CD14-positive monocyte (primary cell): ENCODE measurements at regions of chrX and their contacts with region 1.

Region 1: GRCh38 chrX:153470435-153471363 is at the start of gene HAUS7:
- DNase-seq: peak; percentile 78 to 92 (median 91)
- H3K4me3 ChIP-seq: peak within 1 kb of the TSS; percentile 52 to 83 (median 71)
- H3K4me3 Mint-ChIP-seq: peak within 1 kb of the TSS; percentile 82 to 86
- H3K27ac ChIP-seq: peak within 1 kb of the TSS in 1 of 2 donors; percentile 78
- H3K27ac Mint-ChIP-seq: peak within 1 kb of the TSS in 6 of 7 donors; percentile 25 to 84 (median 76)
- H3K4me1 ChIP-seq: peaks cover 20 to 21% of the 10 kb centered on the region in 2 donors
- H3K4me1 Mint-ChIP-seq: peaks cover 15% of the 10 kb centered on the region
- H3K27me3 ChIP-seq: peaks cover 0 to 8% of the 10 kb centered on the region in 2 donors
- H3K27me3 Mint-ChIP-seq: peaks cover 7 to 16% (median 14%) of the 10 kb centered on the region in 3 donors
- CTCF ChIP-seq: peak; percentile 49
- polyA plus RNA-seq, gene HAUS7: 23.8 to 37.5 (median 26.7) TPM

Region 2: DNA sequence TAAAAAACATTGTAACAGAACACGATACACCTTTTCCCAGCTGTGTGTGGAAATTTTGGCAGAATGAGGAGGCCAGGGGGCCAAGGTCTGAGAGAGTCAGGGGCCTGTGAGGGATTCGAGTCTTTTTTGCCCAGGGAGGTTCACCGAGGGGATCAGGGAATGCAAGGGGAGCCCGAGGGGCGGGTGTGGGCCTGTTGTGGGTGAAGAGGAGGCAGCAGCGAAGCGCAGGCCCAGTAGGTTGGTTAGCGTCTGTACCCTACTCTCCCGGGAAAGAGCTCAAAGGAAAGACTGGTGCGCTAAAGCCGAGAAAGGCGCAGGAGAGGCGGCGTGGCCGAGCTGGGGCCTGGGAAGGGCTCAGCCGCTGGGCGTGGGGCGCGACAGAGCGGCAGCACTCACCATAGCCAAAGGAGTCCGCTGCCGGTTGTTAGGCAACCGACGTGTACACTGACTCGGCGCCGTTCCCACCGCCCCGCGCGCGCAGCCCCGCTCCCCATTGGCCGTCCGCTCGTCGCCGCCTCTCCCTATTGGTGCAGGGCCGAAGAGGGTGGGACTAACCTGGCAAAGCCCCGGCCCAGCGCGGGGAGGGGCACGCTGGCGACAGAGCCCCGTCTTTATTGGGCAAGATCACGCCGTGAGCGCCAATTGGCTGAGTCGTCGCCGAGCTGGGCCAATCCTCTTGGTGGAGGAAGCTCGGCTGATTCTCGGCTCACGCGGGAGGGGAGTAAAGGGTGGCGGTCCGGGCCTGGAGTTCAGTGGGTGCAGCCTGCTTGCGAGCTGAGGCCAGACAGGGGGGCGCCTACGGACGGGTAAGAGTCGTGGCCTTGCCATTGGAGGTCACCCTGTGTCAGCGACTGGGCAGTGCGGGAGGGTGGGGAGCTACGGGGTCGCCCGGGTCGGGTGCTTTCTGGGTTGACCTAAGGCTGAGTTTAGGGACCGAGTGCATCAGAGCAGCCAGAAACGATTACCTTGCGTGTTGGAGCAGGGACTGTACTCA is 640.1 kb before region 1 on chrX and contains the starts of genes CETN2 and NSDHL:
- intact Hi-C with region 1: loop called in 1 of 2 experiments (anchors 2 kb)
- DNase-seq: peak; percentile 89 to 94 (median 93)
- H3K4me3 ChIP-seq: peak within 1 kb of the TSS; percentile 44 to 78 (median 66)
- H3K4me3 Mint-ChIP-seq: peak within 1 kb of the TSS; percentile 85 to 92
- H3K27ac ChIP-seq: peak within 1 kb of the TSS; percentile 40 to 83
- H3K27ac Mint-ChIP-seq: peak within 1 kb of the TSS; percentile 85 to 96 (median 89)
- H3K4me1 ChIP-seq: peaks cover 12 to 17% of the 10 kb centered on the region in 2 donors
- H3K4me1 Mint-ChIP-seq: peaks cover 20% of the 10 kb centered on the region
- H3K27me3 ChIP-seq: no peaks in the 10 kb centered on the region
- H3K27me3 Mint-ChIP-seq: peaks cover 0 to 13% (median 2%) of the 10 kb centered on the region in 3 donors
- CTCF ChIP-seq: no peak
- polyA plus RNA-seq, gene CETN2: 5.4 to 26.7 (median 19.9) TPM
- polyA plus RNA-seq, gene NSDHL: 8.2 to 21.3 (median 19.9) TPM

Region 3: GRCh38 chrX:153507484-153508178 is 36.9 kb after region 1 on chrX:
- intact Hi-C with region 1: loop called in 1 of 2 experiments (anchors 5 kb)
- DNase-seq: peak; percentile 60 to 69 (median 63)
- H3K4me3 ChIP-seq: no peak overlapping the region
- H3K4me3 Mint-ChIP-seq: no peak overlapping the region
- H3K27ac ChIP-seq: no peak overlapping the region
- H3K27ac Mint-ChIP-seq: no peak overlapping the region
- H3K4me1 ChIP-seq: no peaks in the 10 kb centered on the region
- H3K4me1 Mint-ChIP-seq: peaks cover 3% of the 10 kb centered on the region
- H3K27me3 ChIP-seq: no peaks in the 10 kb centered on the region
- H3K27me3 Mint-ChIP-seq: peaks cover 4 to 10% (median 4%) of the 10 kb centered on the region in 3 donors
- CTCF ChIP-seq: peak; percentile 65

Region 4: GRCh38 chrX:153599192-153600031 is 128.7 kb after region 1 on chrX:
- intact Hi-C with region 1: loop called (anchors 2 to 5 kb)
- DNase-seq: peak; percentile 83 to 88 (median 85)
- H3K4me3 ChIP-seq: peak overlapping the region; percentile 65 to 84 (median 72)
- H3K4me3 Mint-ChIP-seq: peak overlapping the region; percentile 69 to 84
- H3K27ac ChIP-seq: peak overlapping the region in 1 of 2 donors; percentile 55
- H3K27ac Mint-ChIP-seq: peak overlapping the region in 4 of 7 donors; percentile 12 to 71 (median 60)
- H3K4me1 ChIP-seq: peaks cover 27 to 29% of the 10 kb centered on the region in 2 donors
- H3K4me1 Mint-ChIP-seq: peaks cover 39% of the 10 kb centered on the region
- H3K27me3 ChIP-seq: no peaks in the 10 kb centered on the region
- H3K27me3 Mint-ChIP-seq: peaks cover 0 to 33% (median 4%) of the 10 kb centered on the region in 3 donors
- CTCF ChIP-seq: no peak